ENCODE measurements at regions of chr1 and their contacts with region 1.

Region 1: DNA sequence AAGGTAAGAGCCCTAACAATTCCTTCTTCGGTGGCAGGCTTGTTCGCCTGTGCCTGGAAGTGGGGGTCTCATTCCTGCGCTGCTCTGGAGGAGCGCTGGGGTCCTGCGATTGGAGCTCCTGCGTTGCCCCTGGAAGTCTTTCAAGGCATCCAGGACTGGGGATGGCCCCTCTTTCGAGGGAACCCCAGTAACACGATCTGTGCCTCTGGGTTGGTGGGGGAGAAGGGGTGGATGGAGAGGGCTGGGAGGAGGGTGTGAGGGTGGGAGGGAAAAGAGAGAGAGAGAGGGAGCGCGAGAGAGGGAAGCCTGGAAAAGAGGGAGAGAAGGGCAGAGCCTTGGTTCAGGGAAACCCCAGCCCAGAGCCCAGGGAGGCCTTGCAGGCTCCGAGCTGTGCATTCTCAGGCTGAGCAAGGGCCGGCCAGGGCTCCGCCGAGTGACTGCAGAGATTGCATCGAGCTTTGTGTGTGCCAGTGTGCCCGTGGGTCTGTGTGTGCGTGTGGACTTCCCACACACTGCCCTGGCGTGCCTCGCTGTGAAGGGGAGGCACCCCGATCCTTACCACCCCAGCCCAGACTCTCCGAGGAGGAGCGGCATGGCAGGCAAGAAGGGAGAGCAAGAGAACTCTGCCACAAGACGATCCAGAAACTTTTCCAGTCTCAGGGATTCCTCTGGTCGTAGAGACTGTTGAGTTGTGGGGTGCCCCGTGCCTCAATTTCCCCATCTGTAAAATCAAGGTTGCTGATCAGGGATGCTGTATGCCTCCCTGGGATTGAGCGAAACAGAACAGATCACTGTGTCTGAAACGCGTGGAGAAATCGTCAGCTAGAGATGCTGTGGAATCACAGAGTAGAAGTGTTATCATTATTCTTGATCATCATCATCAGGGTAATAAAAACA is 619 bp downstream of the BCL9 start:
- DNase-seq: peak; percentile 56
- ATAC-seq: peak; percentile 31
- H3K4me3 Mint-ChIP-seq: no peak overlapping the region
- H3K27ac Mint-ChIP-seq: no peak overlapping the region
- H3K4me1 Mint-ChIP-seq: peaks cover 40% of the 10 kb centered on the region
- H3K27me3 Mint-ChIP-seq: peaks cover 5% of the 10 kb centered on the region

Region 2: DNA sequence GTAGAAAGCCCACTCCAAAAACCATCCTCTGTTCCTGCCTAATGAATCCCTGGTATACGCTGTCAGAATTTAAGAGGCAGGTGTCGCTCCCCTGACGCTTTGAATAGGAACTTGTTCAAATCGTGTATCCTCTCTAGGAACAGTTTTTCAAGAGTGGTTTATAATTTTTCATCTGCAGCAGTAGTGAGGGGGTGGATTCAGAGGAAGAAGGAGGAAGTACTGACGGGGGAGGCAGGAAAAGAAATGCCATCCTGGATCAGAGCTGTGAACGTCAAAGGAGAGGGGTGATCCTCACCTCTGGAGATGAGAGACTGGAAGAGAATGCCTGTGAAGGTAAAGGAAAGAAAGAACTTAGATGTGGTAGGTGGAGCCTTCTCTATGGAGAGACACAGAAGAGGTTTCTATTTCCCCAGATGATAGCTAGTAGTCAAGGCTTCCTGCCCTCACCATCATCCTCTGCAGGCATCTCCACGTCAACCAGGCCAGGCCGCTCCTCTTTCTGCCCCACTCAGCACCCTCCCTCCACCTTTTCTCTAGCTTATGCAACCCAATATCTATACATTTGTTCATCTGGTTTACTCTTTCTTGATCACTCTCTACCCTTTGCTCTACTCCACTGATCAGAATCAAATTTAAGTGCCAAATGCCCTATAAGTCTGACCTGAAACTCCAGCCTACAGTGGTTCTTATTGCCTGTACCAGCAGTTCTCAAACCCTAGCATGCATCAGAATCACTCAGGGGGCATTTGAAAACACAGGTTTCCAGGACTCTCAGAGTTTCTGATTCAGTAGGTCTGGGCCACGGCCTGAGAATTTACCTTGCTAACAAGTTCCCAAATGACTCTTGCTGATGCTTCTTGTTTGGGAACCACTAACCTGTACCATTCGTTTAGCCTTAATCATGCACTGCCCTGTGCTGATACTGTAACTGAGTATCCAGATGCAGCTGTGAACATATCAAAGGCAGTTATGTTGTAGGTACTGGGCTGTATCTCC is 13.7 kb before region 1 on chr1:
- POLR2A ChIA-PET with region 1: interaction called, 17 read pairs
- DNase-seq: no peak
- ATAC-seq: peak; percentile 90
- H3K4me3 Mint-ChIP-seq: no peak overlapping the region
- H3K27ac Mint-ChIP-seq: no peak overlapping the region
- H3K4me1 Mint-ChIP-seq: peaks cover 1% of the 10 kb centered on the region
- H3K27me3 Mint-ChIP-seq: no peaks in the 10 kb centered on the region

Region 3: GRCh38 chr1:147599362-147600118 is 57.6 kb after region 1 on chr1:
- POLR2A ChIA-PET with region 1: interaction called, 33 read pairs
- DNase-seq: peak; percentile 95
- ATAC-seq: peak; percentile 83
- H3K4me3 Mint-ChIP-seq: peak overlapping the region; percentile 92
- H3K27ac Mint-ChIP-seq: peak overlapping the region; percentile 96
- H3K4me1 Mint-ChIP-seq: peaks cover 17% of the 10 kb centered on the region
- H3K27me3 Mint-ChIP-seq: peaks cover 10% of the 10 kb centered on the region